Activated CD8-positive, alpha-beta T cell treated with anti-CD3 and anti-CD28 coated beads for 36 hours (primary cell): ENCODE measurements at regions of chr18 and their contacts with region 1.

Region 1: DNA sequence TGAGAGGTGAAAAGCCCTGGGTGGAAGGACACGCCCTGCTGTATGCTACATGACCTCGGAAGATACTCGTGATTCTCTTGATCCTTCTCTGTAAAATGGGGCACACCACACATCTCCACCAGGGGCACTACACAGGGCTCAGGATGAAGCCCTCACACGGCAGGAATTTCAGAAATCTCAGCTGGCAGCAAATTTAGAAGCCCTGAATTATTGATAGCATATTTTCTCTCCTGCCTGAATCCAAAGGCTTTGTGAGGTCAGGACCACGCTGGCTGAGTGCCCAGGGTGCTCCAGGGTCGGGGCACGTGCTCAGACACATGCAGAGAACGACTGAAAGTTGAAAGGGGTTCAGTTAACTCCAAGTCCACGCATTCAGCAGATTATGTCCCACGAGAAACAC is 42.1 kb upstream of the GALR1 start:
- DNase-seq: peak; percentile 69
- ATAC-seq: peak; percentile 78
- H3K4me3 Mint-ChIP-seq: no peak overlapping the region
- H3K27ac Mint-ChIP-seq: peak overlapping the region; percentile 36
- H3K4me1 Mint-ChIP-seq: peaks cover 40% of the 10 kb centered on the region
- H3K27me3 Mint-ChIP-seq: no peaks in the 10 kb centered on the region
- CTCF ChIP-seq: peak; percentile 68

Region 2: DNA sequence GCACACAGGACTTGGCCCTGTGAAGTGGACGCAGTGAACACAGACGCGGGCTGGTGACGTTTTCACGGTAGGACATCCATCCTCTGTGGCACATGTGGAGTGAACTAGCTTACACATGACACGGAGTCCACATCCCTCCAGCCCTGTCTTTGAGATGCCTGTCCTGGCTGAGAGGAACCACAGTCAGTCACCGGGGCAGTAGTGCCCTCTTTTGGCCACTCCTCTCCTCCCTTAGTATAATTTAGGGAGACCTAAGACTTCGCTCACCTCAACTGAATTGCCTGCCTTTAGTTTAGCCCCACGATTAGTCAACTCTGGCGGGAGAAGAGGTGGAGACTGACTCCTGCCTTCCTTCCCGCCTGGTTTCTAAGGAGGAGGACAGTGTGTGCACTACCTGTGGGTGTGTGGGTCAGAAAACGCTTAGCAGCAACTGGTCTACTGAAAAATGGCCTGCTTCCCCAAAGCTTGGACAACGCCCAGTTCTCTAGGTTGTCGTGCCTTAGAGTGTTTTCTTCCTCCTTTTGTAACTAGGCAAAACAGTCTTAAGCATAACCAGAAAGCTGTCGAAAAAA is 145.5 kb before region 1 on chr18:
- CTCF ChIA-PET with region 1: interaction called, 5 read pairs
- POLR2A ChIA-PET with region 1: no interaction called
- intact Hi-C with region 1: loop called (anchors 2 kb)
- DNase-seq: peak; percentile 28
- ATAC-seq: peak; percentile 40
- H3K4me3 Mint-ChIP-seq: peak overlapping the region; percentile 40
- H3K27ac Mint-ChIP-seq: peak overlapping the region; percentile 98
- H3K4me1 Mint-ChIP-seq: peaks cover 82% of the 10 kb centered on the region
- H3K27me3 Mint-ChIP-seq: no peaks in the 10 kb centered on the region
- CTCF ChIP-seq: no peak

Region 3: GRCh38 chr18:77223653-77224052 is 16.1 kb after region 1 on chr18:
- CTCF ChIA-PET with region 1: interaction called, 15 read pairs
- POLR2A ChIA-PET with region 1: interaction called, 3 read pairs
- intact Hi-C with region 1: no loop called
- DNase-seq: no peak
- ATAC-seq: peak; percentile 37
- H3K4me3 Mint-ChIP-seq: no peak overlapping the region
- H3K27ac Mint-ChIP-seq: no peak overlapping the region
- H3K4me1 Mint-ChIP-seq: peaks cover 15% of the 10 kb centered on the region
- H3K27me3 Mint-ChIP-seq: peaks cover 2% of the 10 kb centered on the region
- CTCF ChIP-seq: no peak

Region 4: GRCh38 chr18:77254711-77255405 is 47.3 kb after region 1 on chr18:
- CTCF ChIA-PET with region 1: no interaction called
- POLR2A ChIA-PET with region 1: no interaction called
- intact Hi-C with region 1: no loop called
- DNase-seq: no peak
- ATAC-seq: no peak
- H3K4me3 Mint-ChIP-seq: no peak overlapping the region
- H3K27ac Mint-ChIP-seq: no peak overlapping the region
- H3K4me1 Mint-ChIP-seq: peaks cover 4% of the 10 kb centered on the region
- H3K27me3 Mint-ChIP-seq: peaks cover 45% of the 10 kb centered on the region
- CTCF ChIP-seq: no peak